Mucosa of descending colon (tissue), 3 donors: ENCODE measurements at regions of chr1 and their contacts with region 1.

Region 1: GRCh38 chr1:26145041-26145959 is 13.6 kb upstream of the FAM110D start:
- DNase-seq: peak in 2 of 3 donors; percentile 75 to 94
- ATAC-seq: peak; percentile 97
- H3K4me3 ChIP-seq: no peak overlapping the region
- H3K4me1 ChIP-seq: no peaks in the 10 kb centered on the region
- CTCF ChIP-seq: peak; percentile 47

Region 2: GRCh38 chr1:25895365-25895993 is 249.8 kb before region 1 on chr1:
- intact Hi-C with region 1: no loop called
- DNase-seq: peak; percentile 88 to 92 (median 90)
- ATAC-seq: peak; percentile 95
- H3K4me3 ChIP-seq: no peak overlapping the region
- H3K4me1 ChIP-seq: peaks cover 6% of the 10 kb centered on the region
- CTCF ChIP-seq: peak; percentile 94

Region 3: DNA sequence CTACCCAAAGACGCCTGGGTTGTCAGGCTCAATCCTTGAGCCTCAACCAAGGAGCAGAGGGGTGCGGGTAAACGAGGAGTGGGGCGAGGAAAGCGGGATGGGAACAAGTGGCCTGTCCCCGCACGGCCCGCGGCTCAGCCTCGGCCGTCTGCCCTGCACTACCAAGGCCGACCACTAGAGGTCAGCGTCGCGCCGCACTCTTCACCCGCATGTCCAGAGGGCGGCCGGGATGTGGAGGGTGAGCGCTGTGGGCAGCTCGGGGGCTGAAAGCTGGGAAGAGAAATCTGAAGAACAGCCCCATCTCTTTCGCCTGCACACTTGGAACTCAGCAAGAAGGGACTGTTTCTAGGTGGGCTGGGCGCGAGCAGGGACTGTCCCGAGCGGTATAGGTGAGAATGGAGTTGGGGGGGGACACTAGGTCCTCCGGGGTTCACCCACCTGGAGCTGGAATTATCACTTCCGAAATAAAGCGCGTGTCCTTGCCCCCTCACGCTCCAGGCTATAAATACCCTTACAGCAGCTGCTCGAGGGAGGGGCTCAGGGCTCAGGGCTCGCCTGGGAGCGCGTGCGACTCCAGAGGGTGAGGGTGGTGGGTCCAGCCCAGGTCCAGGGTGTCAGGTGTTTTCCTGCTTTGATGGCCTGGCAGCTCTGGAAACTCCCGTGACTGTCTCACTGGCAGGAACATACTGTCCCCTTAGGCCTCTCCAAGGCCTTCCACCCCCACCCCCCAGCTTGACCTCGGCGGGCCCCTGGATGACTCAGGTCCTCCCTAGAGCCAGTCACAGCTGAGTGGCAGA is 109.1 kb before region 1 on chr1:
- intact Hi-C with region 1: loop called in 1 of 2 experiments (anchors 10 kb)
- DNase-seq: peak; percentile 82 to 91 (median 90)
- ATAC-seq: peak; percentile 95
- H3K4me3 ChIP-seq: peak overlapping the region; percentile 44
- H3K4me1 ChIP-seq: peaks cover 9% of the 10 kb centered on the region
- CTCF ChIP-seq: peak; percentile 100

Region 4: DNA sequence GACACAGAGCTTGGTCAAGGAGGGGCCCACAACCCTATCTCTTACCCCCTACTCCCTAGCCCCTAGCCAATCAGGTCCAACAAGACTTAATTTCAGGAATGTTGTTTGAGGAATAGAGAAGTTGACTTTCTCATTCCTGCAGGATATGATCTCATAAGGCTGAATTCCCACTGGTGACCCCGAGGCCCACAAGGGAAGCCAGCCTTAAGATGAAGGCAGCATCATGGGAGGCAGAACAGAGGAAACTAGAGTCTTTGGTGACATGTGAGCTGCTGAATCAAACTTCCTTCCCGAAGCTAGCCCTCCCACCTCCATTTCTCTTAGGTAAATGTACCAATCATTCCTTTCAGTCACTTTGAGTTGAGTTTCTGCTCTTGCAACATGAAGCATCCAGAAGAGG is 42.8 kb before region 1 on chr1:
- intact Hi-C with region 1: loop called (anchors 2 to 5 kb)
- DNase-seq: no peak
- ATAC-seq: no peak
- H3K4me3 ChIP-seq: no peak overlapping the region
- H3K4me1 ChIP-seq: no peaks in the 10 kb centered on the region
- CTCF ChIP-seq: no peak

Region 5: DNA sequence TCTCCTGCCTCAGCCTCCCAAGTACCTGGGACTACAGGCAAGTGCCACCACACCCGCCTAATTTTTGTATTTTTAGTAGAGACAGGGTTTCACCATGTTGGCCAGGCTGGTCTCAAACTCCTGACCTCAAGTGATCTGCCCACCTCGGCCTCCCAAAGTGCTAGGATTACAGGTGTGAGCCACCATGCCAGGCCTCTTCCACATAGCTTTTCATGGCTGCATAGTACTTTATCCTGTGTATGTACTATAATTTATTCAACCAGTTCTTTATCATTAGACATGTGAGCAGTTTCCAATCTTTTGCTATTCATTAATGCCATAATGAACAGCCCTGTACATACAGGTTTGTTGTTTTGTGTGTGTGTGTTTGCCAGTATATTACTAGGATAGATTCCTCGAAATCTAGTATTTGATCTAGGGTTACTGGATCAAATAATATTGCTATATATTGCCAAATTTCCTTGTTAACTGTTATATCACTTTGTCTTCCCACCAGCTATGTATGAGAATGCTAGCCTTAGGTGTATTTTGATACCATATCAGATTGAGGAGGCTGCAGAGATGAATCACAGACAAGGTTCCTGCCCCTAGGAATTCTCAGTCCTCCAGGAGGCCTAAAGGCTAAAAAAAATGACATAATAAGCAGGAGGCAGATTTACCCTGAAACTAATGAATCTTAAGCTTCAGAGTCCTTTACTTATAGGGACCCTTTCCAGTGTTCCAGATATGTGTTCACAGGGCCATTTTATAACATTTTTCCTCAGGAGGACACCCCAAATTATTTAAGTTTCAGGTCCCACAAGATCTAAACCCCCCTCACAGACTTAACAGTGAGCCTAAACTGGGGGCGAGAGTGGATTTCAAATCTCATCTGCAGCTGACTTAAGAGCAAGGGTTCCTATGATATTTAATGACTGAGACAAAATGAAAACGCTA is 35.8 kb before region 1 on chr1:
- intact Hi-C with region 1: loop called (anchors 2 to 5 kb)
- DNase-seq: no peak
- ATAC-seq: no peak
- H3K4me3 ChIP-seq: no peak overlapping the region
- H3K4me1 ChIP-seq: peaks cover 26% of the 10 kb centered on the region
- CTCF ChIP-seq: no peak